Pancreas (tissue), 10 donors: ENCODE measurements at regions of chr19 and their contacts with region 1.

Region 1: GRCh38 chr19:34041925-34042521 is 130.3 kb upstream of the LSM14A start:
- DNase-seq: peak; percentile 16 to 92 (median 71)
- ATAC-seq: peak in 3 of 4 donors; percentile 73 to 79 (median 79)
- H3K4me3 ChIP-seq: no peak overlapping the region
- H3K27ac ChIP-seq: no peak overlapping the region
- H3K4me1 ChIP-seq: no peaks in the 10 kb centered on the region
- H3K27me3 ChIP-seq: no peaks in the 10 kb centered on the region
- CTCF ChIP-seq: peak; percentile 72 to 94 (median 86)

Region 2: DNA sequence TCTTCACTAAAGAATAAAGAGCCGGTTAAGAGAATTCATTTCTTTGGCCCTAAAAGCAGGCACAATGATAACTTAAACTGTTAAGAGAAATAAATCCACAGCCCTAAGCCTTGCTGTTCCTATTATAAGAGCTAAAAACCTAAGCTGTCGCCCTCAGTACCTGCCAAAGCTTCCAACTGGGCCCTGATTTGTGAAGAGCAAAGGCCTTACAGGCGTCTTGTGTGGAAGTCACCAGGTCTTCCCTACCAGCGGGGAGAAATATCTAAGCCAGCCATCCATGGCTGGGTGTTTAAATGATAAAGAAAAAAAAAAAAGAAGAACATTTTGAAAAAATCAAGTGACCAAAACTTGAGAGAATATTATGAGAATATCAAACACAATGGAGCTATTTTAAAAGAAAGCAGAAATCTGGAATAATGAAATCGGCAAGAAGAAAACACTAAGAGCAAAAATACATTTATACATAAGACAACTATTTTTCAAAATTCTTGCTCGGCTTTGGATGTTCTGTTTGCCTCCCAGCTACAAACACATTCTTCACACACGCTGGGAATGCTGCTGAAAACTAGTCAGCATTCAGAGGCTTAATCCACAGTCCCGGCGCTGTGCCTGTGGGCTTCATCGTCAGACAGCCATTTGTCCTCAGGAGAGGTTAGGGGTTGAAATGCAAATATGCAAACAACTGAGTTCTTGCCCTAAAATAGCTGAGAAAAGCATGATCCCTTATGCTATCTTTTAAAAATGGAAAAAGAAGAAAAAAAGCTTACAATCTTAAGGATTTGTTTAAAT is 40.5 kb after region 1 on chr19:
- intact Hi-C with region 1: no loop called
- DNase-seq: no peak
- ATAC-seq: no peak
- H3K4me3 ChIP-seq: no peak overlapping the region
- H3K27ac ChIP-seq: no peak overlapping the region
- H3K4me1 ChIP-seq: no peaks in the 10 kb centered on the region
- H3K27me3 ChIP-seq: no peaks in the 10 kb centered on the region
- CTCF ChIP-seq: no peak

Region 3: DNA sequence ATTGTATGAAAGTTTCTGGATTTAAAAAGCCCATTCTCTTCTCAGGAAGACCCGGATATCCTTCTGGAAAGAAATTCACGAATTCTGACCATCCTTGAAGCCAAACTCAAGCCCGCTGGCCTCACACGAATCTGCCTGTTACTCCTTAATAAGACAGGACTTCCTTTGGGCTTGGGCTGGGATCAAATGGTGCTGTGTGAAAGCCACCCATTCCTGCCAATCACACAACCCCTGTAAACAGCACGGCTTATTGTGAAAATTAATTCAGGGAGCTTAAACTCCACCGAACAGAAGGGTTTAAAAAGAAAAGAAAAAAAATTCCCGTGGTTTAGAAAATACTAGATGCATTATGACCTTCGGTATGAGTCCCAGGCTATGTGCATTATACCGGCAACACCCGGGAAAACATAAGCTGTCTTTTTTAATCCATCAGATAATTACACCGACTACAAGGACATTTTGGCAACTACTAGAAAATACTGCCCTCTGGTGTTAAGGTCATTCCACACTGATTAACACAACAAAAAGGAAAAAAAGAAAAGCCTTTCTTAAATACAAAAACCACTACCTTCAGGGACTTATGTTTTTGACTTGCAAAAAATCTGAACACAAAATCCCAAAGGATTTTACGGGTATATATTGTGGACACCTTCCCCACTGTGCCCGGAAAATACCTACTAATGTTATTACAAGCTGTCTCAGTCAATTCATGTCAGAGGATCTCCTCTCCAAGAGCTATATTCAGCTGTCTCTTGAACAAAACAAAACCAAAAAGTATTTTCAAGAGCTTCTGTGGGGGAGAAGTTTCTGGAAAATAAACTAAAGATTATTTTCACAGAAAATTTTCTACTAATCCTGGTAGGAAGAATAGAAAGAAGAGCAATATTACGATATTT is 54.2 kb after region 1 on chr19:
- intact Hi-C with region 1: loop called in 1 of 3 experiments (anchors 10 kb)
- DNase-seq: no peak
- ATAC-seq: peak; percentile 50 to 88 (median 80)
- H3K4me3 ChIP-seq: no peak overlapping the region
- H3K27ac ChIP-seq: no peak overlapping the region
- H3K4me1 ChIP-seq: no peaks in the 10 kb centered on the region
- H3K27me3 ChIP-seq: peaks cover 0 to 3% (median 0%) of the 10 kb centered on the region in 4 donors
- CTCF ChIP-seq: peak; percentile 16 to 47 (median 34)

Region 4: GRCh38 chr19:34120846-34121639 is 79.0 kb after region 1 on chr19:
- intact Hi-C with region 1: no loop called
- DNase-seq: peak in 2 of 6 donors; percentile 25 to 27
- ATAC-seq: peak in 2 of 4 donors; percentile 51 to 66
- H3K4me3 ChIP-seq: no peak overlapping the region
- H3K27ac ChIP-seq: no peak overlapping the region
- H3K4me1 ChIP-seq: no peaks in the 10 kb centered on the region
- H3K27me3 ChIP-seq: no peaks in the 10 kb centered on the region
- CTCF ChIP-seq: peak; percentile 27 to 60 (median 46)

Region 5: GRCh38 chr19:34145741-34146202 is 103.7 kb after region 1 on chr19:
- intact Hi-C with region 1: loop called in 2 of 3 experiments (anchors 5 to 10 kb)
- DNase-seq: peak in 1 of 6 donors; percentile 52
- ATAC-seq: peak; percentile 40 to 86 (median 72)
- H3K4me3 ChIP-seq: no peak overlapping the region
- H3K27ac ChIP-seq: no peak overlapping the region
- H3K4me1 ChIP-seq: peaks cover 0 to 7% (median 0%) of the 10 kb centered on the region in 3 donors
- H3K27me3 ChIP-seq: no peaks in the 10 kb centered on the region
- CTCF ChIP-seq: peak; percentile 60 to 69 (median 62)